ENCODE measurements at regions of chr2 and their contacts with region 1.

Region 1: DNA sequence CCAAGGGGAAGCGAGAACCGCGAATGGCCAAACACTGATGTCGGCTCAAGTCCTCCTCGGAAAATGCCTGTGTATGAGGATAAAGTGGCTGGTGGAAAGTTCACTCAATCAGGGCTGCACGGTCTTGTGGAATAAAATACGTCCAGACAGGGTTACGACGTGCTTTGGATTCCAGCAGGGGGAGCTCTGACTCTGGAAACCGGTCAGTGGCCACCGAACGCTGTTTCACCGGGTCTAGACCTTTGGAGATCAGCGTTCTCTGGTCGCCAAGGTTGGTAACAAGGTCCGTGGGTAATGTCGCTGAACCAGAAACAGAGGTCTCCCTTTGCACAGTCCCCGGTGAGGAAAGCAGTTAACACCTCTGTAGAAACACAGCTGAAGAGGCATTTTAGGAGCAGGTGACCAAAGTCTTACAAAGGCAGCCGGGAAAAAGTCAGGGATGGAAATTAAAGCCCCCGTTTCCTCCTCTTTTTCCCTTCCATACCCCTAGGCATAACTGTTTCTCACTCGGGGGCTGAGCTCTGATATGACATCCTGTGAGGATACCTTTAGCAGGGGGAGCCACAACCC is 47.8 kb downstream of the CDCA7 start:
- DNase-seq: peak; percentile 91
- H3K4me3 Mint-ChIP-seq: peak overlapping the region; percentile 67
- H3K27ac Mint-ChIP-seq: peak overlapping the region; percentile 73
- H3K4me1 Mint-ChIP-seq: peaks cover 27% of the 10 kb centered on the region
- H3K27me3 Mint-ChIP-seq: no peaks in the 10 kb centered on the region
- CTCF ChIP-seq: peak; percentile 89

Region 2: GRCh38 chr2:173027181-173028128 is 375.0 kb before region 1 on chr2:
- CTCF ChIA-PET with region 1: interaction called, 3 read pairs
- intact Hi-C with region 1: loop called (anchors 10 kb)
- DNase-seq: peak; percentile 84
- H3K4me3 Mint-ChIP-seq: no peak overlapping the region
- H3K27ac Mint-ChIP-seq: no peak overlapping the region
- H3K4me1 Mint-ChIP-seq: peaks cover 10% of the 10 kb centered on the region
- H3K27me3 Mint-ChIP-seq: peaks cover 15% of the 10 kb centered on the region
- CTCF ChIP-seq: peak; percentile 82

Region 3: DNA sequence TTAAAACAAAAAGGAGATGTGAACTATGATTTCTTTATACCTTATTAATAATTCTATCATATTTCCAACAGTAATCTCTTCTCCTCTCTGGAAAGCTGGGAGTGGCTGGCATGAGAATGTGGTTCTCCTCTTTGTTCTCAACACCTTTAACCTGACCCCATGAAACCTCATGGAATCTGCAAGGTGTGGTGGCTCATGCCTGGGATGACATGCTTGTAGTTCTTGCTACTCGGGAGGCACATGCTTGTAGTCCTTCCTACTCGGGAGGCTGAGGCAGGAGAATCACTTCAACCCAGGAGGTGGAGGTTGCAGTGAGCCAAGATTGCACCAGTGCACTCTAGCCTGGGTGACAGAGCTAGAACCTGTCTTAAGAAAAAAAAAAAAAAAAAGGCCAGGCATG is 58.6 kb before region 1 on chr2:
- CTCF ChIA-PET with region 1: no interaction called
- intact Hi-C with region 1: no loop called
- DNase-seq: no peak
- H3K4me3 Mint-ChIP-seq: no peak overlapping the region
- H3K27ac Mint-ChIP-seq: no peak overlapping the region
- H3K4me1 Mint-ChIP-seq: peaks cover 9% of the 10 kb centered on the region
- H3K27me3 Mint-ChIP-seq: no peaks in the 10 kb centered on the region
- CTCF ChIP-seq: no peak

Region 4: DNA sequence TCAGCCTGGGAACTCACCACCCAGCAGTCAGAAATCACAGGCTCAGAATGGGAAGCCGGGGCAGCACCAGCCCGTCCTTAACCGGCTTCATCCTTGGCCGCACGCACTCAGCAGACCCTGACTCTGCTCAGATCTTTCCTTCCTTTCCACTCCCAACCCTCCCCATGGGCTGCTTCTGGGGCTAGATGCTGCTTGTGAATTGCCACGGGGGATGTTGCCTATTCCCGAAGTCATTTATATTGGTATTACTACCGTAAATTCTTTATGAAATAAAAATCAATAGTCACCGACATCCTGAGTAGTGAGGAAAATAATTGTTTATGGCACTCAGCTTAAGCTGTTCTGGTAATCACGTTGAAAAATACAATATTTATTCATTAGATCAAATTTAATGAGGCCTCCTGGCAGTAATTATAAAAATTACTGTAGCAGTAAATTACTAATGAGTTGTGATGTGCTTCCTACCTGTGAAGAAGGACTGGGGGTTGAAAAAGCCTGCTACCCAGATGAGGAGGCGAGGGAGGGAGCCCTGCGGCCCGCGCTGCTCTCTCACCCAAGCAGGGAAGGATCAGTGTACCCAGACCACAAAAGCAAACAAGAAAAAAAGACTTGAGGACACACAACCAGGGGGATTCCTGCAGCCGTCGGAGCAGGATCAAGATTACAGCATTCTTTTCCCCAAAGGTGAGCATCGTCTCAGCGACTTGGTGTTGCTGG is 16.3 kb before region 1 on chr2:
- CTCF ChIA-PET with region 1: no interaction called
- intact Hi-C with region 1: no loop called
- DNase-seq: no peak
- H3K4me3 Mint-ChIP-seq: no peak overlapping the region
- H3K27ac Mint-ChIP-seq: no peak overlapping the region
- H3K4me1 Mint-ChIP-seq: no peaks in the 10 kb centered on the region
- H3K27me3 Mint-ChIP-seq: no peaks in the 10 kb centered on the region
- CTCF ChIP-seq: no peak

Region 5: GRCh38 chr2:173448938-173449471 is 46.5 kb after region 1 on chr2:
- CTCF ChIA-PET with region 1: interaction called, 30 read pairs
- intact Hi-C with region 1: loop called (anchors 1 kb)
- DNase-seq: peak; percentile 92
- H3K4me3 Mint-ChIP-seq: peak overlapping the region; percentile 62
- H3K27ac Mint-ChIP-seq: no peak overlapping the region
- H3K4me1 Mint-ChIP-seq: no peaks in the 10 kb centered on the region
- H3K27me3 Mint-ChIP-seq: peaks cover 13% of the 10 kb centered on the region
- CTCF ChIP-seq: peak; percentile 86

Region 6: DNA sequence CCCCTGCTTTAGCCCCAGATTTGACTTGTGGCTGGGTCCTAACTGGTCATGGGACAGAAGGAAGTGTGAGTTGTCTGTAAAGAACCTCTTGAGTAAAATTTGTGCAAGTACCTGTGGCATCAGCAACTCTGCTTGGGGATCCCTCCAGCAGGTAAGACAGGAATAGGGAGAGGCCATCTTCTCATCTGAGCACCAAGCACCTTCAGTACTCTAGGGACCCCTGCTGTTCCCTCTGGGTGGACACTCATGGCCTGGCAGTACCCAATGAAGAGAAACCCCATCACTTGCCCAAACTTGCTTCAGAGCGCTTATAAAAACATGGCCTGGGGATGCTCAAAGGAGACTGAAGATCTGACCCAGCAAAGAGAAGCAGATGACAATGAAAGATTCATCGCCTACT is 264.9 kb after region 1 on chr2:
- CTCF ChIA-PET with region 1: no interaction called
- intact Hi-C with region 1: loop called (anchors 5 kb)
- DNase-seq: peak; percentile 38
- H3K4me3 Mint-ChIP-seq: no peak overlapping the region
- H3K27ac Mint-ChIP-seq: no peak overlapping the region
- H3K4me1 Mint-ChIP-seq: peaks cover 10% of the 10 kb centered on the region
- H3K27me3 Mint-ChIP-seq: no peaks in the 10 kb centered on the region
- CTCF ChIP-seq: peak; percentile 39

Region 7: DNA sequence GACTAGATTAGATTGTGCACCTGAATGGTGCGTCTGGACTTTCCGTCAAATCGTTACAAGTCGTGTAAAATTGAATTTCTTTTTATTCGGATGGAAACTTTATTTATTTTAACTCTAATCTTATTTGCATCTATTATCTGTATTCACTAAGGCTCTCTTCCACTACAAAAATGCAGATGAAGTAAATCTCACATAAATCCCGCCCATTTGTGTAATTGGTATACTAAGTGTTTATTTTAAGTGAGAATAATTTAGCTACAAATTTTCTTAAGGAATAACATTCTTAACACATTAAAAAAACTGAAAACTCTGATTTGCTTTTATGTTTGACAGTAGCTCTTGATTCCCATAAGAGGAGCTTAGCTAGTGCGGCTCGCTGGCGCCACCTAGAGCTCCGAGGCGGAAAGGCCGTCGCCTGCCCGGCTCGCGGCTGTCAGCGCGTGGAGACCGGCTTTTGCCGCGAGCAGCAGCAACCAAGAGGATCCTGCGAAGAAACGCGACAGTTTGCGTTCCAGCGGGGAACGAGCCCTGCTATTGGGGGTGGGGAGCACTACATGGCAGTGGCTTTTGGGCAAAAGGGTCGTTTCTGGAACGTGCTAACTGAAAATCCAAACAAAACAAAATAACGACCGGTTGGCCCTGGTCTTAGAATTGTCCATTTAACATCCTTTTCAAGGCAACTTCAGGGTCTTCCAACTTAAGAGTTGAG is 939.0 kb after region 1 on chr2:
- CTCF ChIA-PET with region 1: interaction called, 3 read pairs
- intact Hi-C with region 1: loop called (anchors 5 kb)
- DNase-seq: peak; percentile 89
- H3K4me3 Mint-ChIP-seq: peak overlapping the region; percentile 62
- H3K27ac Mint-ChIP-seq: no peak overlapping the region
- H3K4me1 Mint-ChIP-seq: peaks cover 14% of the 10 kb centered on the region
- H3K27me3 Mint-ChIP-seq: peaks cover 73% of the 10 kb centered on the region
- CTCF ChIP-seq: peak; percentile 94